HepG2 (cell line): ENCODE measurements at regions of chr18 and their contacts with region 1.

Region 1: DNA sequence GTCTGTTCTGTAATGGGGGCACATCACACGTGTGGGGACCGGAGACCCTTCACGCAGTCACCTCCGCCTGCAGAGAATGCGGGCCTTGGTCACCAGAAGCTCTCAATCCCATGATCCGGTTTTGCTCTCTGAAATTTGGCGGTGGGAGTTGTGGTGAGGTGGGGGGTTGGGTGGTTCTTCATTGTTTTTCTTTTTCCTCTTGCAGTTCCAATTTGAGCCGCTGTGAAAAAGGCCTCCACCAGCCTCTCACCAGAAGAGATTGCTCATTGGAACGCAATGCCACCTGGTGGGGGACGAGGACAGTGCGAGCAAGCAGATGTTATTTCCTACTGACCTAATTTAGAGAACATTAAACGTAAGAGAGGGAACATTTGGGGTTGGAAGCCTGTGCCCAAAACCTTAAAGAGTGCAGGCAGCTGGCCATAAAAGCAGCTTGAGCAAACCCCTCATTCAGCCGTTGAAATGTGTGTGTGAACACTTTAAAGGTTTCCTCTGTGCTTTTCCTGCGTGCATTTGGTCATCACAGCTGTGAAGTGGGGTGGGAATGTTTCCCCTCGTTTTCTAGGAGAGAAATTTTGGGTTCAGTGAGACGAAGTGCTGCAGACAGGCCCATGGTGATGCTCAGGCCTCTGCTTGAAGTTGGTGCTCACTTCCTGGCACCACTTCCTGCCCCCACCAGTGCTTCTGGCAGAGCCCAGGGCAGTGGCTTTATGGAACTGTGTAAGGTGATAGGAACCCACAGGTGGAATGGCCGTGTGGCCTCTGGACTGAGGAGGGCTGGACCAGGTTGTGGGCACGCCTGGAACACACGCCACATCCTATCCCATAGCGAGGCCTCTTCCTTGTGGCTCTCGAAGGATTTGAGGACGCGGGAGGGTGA is 61.7 kb downstream of the ZCCHC2 start:
- DNase-seq: peak; percentile 82
- ATAC-seq: peak; percentile 76
- H3K4me3 ChIP-seq: no peak overlapping the region
- H3K27ac ChIP-seq: no peak overlapping the region
- H3K4me1 ChIP-seq: 0 out of 2 replicates have a peak, but pooled peaks cover 6% of the 10 kb centered on the region
- H3K27me3 ChIP-seq: no peaks in the 10 kb centered on the region
- CTCF ChIP-seq: peak; percentile 87
- EP300 ChIP-seq: no peak
- POLR2A ChIP-seq: no peak
- RAD21 ChIP-seq: peak; percentile 81

Region 2: DNA sequence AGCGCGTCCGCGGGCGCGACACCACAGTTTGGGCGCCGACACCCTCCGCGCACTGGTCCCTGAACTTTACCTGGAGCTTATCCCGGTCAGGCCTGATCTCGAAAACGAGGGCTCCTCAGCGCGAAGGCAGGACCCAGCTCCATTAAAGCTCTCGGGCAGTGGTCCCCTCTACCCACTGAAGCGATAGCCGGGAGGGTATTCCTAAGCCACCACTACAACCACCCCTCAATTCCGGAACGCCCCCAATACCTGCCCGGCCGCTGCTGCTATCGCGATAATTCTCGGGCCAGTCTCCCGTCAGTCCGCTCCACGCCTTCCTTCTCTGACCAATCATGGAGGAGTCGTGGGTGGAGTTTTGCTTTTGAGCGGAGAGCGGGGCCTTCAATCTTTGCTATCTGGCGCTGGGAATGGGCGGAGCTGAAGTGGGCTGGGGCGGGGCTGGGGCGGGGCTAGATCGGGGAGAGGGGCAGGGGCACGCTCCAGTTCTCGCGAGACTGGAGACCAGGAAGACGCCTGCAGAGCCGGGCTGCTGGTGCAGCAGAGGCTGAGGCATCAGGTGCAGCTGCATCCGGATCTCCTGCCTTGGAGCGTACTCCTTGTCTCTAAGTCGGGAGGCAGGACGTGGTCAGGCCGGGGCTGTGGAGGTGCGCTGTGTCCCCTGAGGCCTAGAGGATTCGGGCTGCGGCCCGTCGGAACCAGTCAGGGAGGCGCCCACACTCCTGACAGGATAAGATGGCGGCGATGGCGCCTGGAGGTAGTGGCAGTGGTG is 397.5 kb before region 1 on chr18 and contains the starts of genes PIGN and RELCH:
- CTCF ChIA-PET with region 1: interaction called, 3 read pairs
- POLR2A ChIA-PET with region 1: no interaction called
- in situ Hi-C with region 1: no loop called
- intact Hi-C with region 1: loop called (anchors 10 kb)
- DNase-seq: peak; percentile 98
- ATAC-seq: peak; percentile 93
- H3K4me3 ChIP-seq: peak within 1 kb of the TSS; percentile 92 to 99 (median 97)
- H3K27ac ChIP-seq: peak within 1 kb of the TSS; percentile 89
- H3K4me1 ChIP-seq: peaks cover 45% of the 10 kb centered on the region
- H3K27me3 ChIP-seq: no peaks in the 10 kb centered on the region; a peak in 1 of 5 replicates
- CTCF ChIP-seq: no peak
- EP300 ChIP-seq: no peak
- POLR2A ChIP-seq: peak; percentile 85 to 88
- RAD21 ChIP-seq: 0 out of 2 replicates have a peak, but pooled peaks have one; percentile 14
- total RNA-seq, gene PIGN: 33.6 and 33.8 TPM in 2 replicates
- total RNA-seq, gene RELCH: 31.7 and 37.7 TPM in 2 replicates

Region 3: GRCh38 chr18:62324917-62325805 is 259.3 kb before region 1 on chr18 and contains the start of gene TNFRSF11A:
- CTCF ChIA-PET with region 1: interaction called, 4 read pairs
- POLR2A ChIA-PET with region 1: no interaction called
- in situ Hi-C with region 1: no loop called
- intact Hi-C with region 1: loop called (anchors 1 kb)
- DNase-seq: no peak
- ATAC-seq: peak; percentile 91
- H3K4me3 ChIP-seq: peak within 1 kb of the TSS; percentile 67 to 90 (median 79)
- H3K27ac ChIP-seq: no peak within 1 kb of the TSS
- H3K4me1 ChIP-seq: peaks cover 66% of the 10 kb centered on the region
- H3K27me3 ChIP-seq: peaks cover 0 to 7% of the 10 kb centered on the region in 2 experiments; a peak in 2 of 5 replicates
- CTCF ChIP-seq: peak; percentile 53
- EP300 ChIP-seq: no peak
- POLR2A ChIP-seq: peak in 1 of 2 experiments; percentile 29; a peak in 1 of 4 replicates
- RAD21 ChIP-seq: peak; percentile 39; the same call in 1 of the 2 replicates
- total RNA-seq, gene TNFRSF11A: 3.6 and 4.6 TPM in 2 replicates

Region 4: GRCh38 chr18:62425465-62426195 is 158.9 kb before region 1 on chr18:
- CTCF ChIA-PET with region 1: interaction called, 20 read pairs
- POLR2A ChIA-PET with region 1: no interaction called
- in situ Hi-C with region 1: no loop called
- intact Hi-C with region 1: loop called (anchors 1 kb)
- DNase-seq: peak; percentile 88
- ATAC-seq: peak; percentile 81
- H3K4me3 ChIP-seq: peak overlapping the region; percentile 42 to 68 (median 62)
- H3K27ac ChIP-seq: peak overlapping the region; percentile 61
- H3K4me1 ChIP-seq: peaks cover 67% of the 10 kb centered on the region
- H3K27me3 ChIP-seq: no peaks in the 10 kb centered on the region
- CTCF ChIP-seq: peak; percentile 91
- EP300 ChIP-seq: no peak
- POLR2A ChIP-seq: no peak
- RAD21 ChIP-seq: peak; percentile 88

Region 5: GRCh38 chr18:62531078-62531477 is 53.4 kb before region 1 on chr18:
- CTCF ChIA-PET with region 1: interaction called, 6 read pairs
- POLR2A ChIA-PET with region 1: no interaction called
- in situ Hi-C with region 1: no loop called
- intact Hi-C with region 1: loop called (anchors 5 kb)
- DNase-seq: no peak
- ATAC-seq: no peak
- H3K4me3 ChIP-seq: peak overlapping the region in 2 of 3 experiments; percentile 18 to 32; a peak in 2 of 6 replicates
- H3K27ac ChIP-seq: peak overlapping the region; percentile 20
- H3K4me1 ChIP-seq: peaks cover 90% of the 10 kb centered on the region
- H3K27me3 ChIP-seq: no peaks in the 10 kb centered on the region; a peak in 1 of 5 replicates
- CTCF ChIP-seq: no peak
- EP300 ChIP-seq: no peak
- POLR2A ChIP-seq: no peak
- RAD21 ChIP-seq: no peak

Region 6: GRCh38 chr18:62982600-62983251 is 398.2 kb after region 1 on chr18:
- CTCF ChIA-PET with region 1: interaction called, 4 read pairs
- POLR2A ChIA-PET with region 1: no interaction called
- in situ Hi-C with region 1: no loop called
- intact Hi-C with region 1: loop called (anchors 1 kb)
- DNase-seq: peak; percentile 36
- ATAC-seq: peak; percentile 34
- H3K4me3 ChIP-seq: no peak overlapping the region
- H3K27ac ChIP-seq: no peak overlapping the region
- H3K4me1 ChIP-seq: peaks cover 5% of the 10 kb centered on the region; the same call in 1 of the 2 replicates
- H3K27me3 ChIP-seq: no peaks in the 10 kb centered on the region
- CTCF ChIP-seq: peak; percentile 85
- EP300 ChIP-seq: no peak
- POLR2A ChIP-seq: no peak
- RAD21 ChIP-seq: peak; percentile 53